AG04449 (cell line): ENCODE measurements at regions of chr6 and their contacts with region 1.

Region 1: GRCh38 chr6:131694831-131695426 is 6.3 kb downstream of the OR2A4 start:
- DNase-seq: no peak
- H3K4me3 ChIP-seq: no peak overlapping the region
- CTCF ChIP-seq: peak; percentile 91

Region 2: DNA sequence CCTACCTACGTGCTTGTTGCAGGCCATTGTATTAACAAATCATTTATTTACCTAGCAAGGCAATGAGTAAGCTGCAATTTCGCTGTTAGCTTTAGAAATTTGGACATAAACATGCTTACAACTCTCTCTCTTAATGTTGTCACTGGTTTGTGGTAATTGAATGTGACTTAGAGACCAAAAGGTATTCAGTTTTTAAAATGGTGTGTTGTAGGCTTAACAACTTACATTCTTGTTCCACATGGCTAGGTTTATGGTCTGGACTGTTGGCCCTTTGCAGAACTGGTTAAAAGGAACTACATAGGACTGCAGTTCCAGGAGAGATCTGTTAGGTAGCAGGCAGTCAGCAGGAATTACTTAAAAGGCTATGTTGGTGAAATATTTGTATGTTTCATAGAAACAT is 26.2 kb after region 1 on chr6:
- CTCF ChIA-PET with region 1: interaction called, 16 read pairs
- POLR2A ChIA-PET with region 1: no interaction called
- DNase-seq: no peak
- H3K4me3 ChIP-seq: no peak overlapping the region
- CTCF ChIP-seq: no peak

Region 3: DNA sequence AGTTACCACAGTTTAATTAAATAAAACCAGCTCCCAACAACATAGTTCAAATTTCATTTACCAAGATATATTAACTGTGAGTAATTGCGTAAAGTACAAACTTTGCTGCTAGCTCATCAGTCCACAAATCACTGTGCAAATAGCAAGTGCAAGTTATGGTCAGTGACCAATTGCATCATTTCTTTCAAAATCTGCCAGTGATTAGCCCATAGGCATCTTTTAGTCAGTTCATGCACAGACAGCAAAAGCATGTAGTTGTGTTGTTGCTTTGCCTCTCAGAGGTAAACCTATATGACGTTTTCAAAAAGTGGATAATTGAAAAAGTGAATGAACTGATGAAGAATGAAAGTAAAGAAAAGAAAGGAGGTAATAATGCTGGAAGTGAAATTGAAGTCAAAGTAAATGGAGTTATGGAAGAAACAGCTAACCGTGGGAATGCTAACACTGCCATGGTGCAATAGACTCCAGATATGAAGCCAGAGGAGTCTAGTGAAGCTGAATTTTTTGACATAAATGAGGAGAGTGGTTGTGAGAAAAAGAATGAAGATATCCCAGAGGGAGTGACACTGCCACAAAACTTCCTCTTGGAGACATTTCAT is 149.4 kb after region 1 on chr6:
- CTCF ChIA-PET with region 1: interaction called, 12 read pairs
- POLR2A ChIA-PET with region 1: no interaction called
- DNase-seq: no peak
- H3K4me3 ChIP-seq: no peak overlapping the region
- CTCF ChIP-seq: no peak

Region 4: GRCh38 chr6:131894735-131895424 is 200.0 kb after region 1 on chr6:
- CTCF ChIA-PET with region 1: interaction called, 12 read pairs
- POLR2A ChIA-PET with region 1: no interaction called
- DNase-seq: no peak
- H3K4me3 ChIP-seq: no peak overlapping the region
- CTCF ChIP-seq: no peak